ENCODE measurements at regions of chr2 and their contacts with region 1.

Region 1: GRCh38 chr2:164737612-164738081 is 104.0 kb downstream of the COBLL1 start:
- DNase-seq: peak; percentile 73
- ATAC-seq: peak; percentile 94
- H3K4me3 ChIP-seq: no peak overlapping the region
- H3K27ac ChIP-seq: no peak overlapping the region
- H3K4me1 ChIP-seq: peaks cover 0 to 20% of the 10 kb centered on the region in 2 experiments; a peak in 3 of 4 replicates
- H3K27me3 ChIP-seq: no peaks in the 10 kb centered on the region
- CTCF ChIP-seq: peak; percentile 57 to 90 (median 81)
- POLR2A ChIP-seq: no peak
- RAD21 ChIP-seq: peak; percentile 92

Region 2: DNA sequence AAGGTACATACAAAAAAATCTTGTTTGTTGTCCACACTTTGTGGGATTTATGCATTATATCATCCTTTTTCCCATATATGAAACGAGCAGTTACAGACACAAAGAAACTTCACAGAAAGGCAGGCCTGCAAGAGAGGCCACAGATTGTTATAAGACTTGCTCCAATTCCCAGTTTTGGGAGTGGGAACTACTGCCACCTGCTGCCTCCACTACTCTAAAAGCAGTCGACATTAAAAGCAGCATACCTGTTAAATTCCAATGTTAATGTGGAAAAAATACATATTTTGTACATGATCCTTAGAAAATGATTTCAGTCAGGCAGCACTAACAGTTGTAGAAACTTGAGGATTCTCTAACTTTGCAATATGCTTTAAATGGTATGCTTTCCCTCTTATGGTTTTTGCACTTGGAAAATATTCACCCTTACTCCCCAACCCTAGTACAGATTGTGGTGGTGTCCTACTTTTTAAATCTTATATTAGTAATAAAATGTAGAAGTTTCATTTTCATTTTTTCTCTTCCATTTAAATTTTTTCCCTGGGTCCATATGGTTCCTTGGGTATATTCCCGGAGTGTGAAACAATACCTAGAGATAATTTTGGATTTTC is 179.8 kb after region 1 on chr2:
- CTCF ChIA-PET with region 1: interaction called, 8 read pairs
- POLR2A ChIA-PET with region 1: no interaction called
- RAD21 ChIA-PET with region 1: no interaction called
- intact Hi-C with region 1: loop called (anchors 1 kb)
- DNase-seq: peak; percentile 40
- ATAC-seq: peak; percentile 83
- H3K4me3 ChIP-seq: no peak overlapping the region
- H3K27ac ChIP-seq: no peak overlapping the region
- H3K4me1 ChIP-seq: peaks cover 0 to 8% of the 10 kb centered on the region in 2 experiments; a peak in 2 of 4 replicates
- H3K27me3 ChIP-seq: no peaks in the 10 kb centered on the region
- CTCF ChIP-seq: peak; percentile 60 to 79 (median 63)
- POLR2A ChIP-seq: no peak
- RAD21 ChIP-seq: peak; percentile 78

Measured in HCT116 (cell line).